ENCODE measurements at regions of chr5 and their contacts with region 1.

Region 1: DNA sequence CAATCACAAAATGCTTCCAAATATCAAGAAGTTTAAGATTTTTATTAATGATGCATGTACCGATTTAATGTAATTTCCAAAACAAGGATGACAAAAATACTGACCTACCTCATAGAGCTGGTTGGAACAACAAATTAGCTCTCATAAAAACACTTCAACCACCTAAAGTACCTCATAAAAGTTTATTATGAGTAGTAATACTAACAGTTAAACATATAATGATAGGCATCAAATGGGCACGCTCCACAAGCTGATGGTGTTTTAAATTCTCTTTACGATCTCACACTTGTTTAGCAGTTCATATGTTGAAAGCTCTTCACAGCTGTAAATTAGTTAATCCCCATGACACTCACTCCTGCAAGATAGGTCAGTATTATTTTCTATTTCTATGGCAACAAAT is 150.0 kb upstream of the KIF2A start:
- DNase-seq: no peak
- H3K4me3 ChIP-seq: no peak overlapping the region
- H3K27me3 ChIP-seq: no peaks in the 10 kb centered on the region
- CTCF ChIP-seq: no peak

Region 2: DNA sequence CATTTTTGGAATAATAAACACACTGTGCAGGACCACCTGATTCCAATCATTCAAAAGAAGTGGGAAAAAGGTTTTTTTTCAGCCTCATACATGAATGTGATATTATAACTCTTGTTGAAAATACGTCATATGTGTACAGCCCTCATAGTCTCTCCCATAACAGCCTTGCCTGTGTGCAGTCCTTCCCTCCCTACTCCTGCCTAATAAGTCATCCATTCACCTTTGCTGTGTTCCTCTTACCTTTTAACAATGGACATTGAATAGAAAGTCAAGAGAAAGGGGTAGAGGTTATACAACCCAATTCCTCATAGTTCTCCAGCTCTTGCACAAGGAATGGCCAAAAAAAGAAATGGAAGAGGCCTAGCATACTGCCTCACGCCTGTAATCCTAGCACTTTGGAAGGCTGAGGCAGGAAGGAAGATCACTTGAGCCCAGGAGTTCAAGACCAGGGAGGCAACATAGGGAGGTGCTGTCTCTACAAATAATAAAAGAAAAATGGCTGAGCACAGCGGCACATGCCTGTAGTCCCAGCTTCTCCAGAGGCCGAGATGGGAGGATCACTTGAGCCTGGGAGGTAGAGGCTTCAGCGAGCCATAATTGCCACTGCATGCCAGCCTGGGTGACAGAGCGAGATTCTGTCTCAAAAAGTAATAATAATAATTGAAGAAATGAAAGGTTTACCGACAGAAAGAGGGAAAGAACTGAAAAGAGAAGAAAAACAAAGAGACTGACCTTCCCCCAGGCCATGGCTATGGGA is 206.1 kb before region 1 on chr5:
- CTCF ChIA-PET with region 1: no interaction called
- POLR2A ChIA-PET with region 1: no interaction called
- DNase-seq: no peak
- H3K4me3 ChIP-seq: no peak overlapping the region
- H3K27me3 ChIP-seq: no peaks in the 10 kb centered on the region
- CTCF ChIP-seq: no peak

Region 3: DNA sequence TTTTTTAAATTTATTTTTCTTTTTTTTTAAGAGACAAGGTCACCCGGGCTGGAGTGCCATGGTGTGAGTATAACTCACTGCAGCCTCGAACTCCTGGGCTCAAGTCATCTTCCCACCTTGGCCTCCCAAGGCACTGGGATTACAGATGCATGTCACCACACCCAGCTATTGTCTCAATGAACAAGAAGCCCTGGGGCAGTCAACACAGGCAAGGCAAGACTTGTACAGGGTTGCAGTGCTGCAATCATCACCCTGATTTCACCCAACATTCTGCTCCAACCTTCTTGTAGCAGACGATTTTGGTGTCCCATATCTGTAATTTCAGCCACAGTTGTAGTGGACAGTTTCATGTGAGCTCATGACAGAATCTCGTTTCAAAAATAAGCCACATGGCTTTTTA is 55.8 kb before region 1 on chr5:
- CTCF ChIA-PET with region 1: no interaction called
- POLR2A ChIA-PET with region 1: no interaction called
- DNase-seq: no peak
- H3K4me3 ChIP-seq: no peak overlapping the region
- H3K27me3 ChIP-seq: no peaks in the 10 kb centered on the region
- CTCF ChIP-seq: no peak

Region 4: GRCh38 chr5:62143268-62144229 is 12.4 kb before region 1 on chr5:
- CTCF ChIA-PET with region 1: interaction called, 12 read pairs
- POLR2A ChIA-PET with region 1: no interaction called
- DNase-seq: peak; percentile 1
- H3K4me3 ChIP-seq: no peak overlapping the region
- H3K27me3 ChIP-seq: peaks cover 2% of the 10 kb centered on the region; the same call in 1 of the 2 replicates
- CTCF ChIP-seq: peak; percentile 59